ENCODE measurements at regions of chr10 and their contacts with region 1.

Region 1: DNA sequence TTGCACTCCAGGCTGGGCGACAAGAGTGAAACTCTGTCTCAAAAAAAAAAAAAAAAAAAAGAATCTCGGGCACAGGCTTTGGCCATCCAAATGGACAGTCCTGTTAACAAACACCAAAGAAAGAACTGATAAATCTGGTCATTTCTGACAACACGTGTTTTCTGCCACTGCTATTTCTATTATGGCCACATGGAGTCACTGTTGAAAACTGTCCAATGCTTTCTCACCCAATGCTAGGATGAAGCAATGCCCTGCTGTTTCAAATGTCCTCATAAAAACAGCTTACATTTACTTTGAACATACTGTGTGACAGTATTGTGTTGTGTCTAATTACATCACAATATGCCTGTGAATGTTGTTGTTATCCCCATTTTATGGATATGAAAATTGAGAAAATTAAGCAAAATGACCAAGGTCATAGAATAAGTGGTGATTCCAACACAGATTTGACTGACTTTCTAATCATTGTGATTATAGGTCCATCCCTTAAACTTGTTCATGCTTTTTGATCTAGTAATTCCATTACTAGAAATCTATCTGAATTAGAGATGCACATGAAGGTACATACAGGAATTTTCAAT is 19.9 kb upstream of the MAP3K8 start:
- DNase-seq: peak in 1 of 3 donors; percentile 69
- ATAC-seq: peak; percentile 89
- H3K4me3 ChIP-seq: no peak overlapping the region
- H3K4me1 ChIP-seq: peaks cover 7% of the 10 kb centered on the region
- CTCF ChIP-seq: peak; percentile 62

Region 2: GRCh38 chr10:30011396-30011795 is 402.7 kb before region 1 on chr10:
- intact Hi-C with region 1: no loop called
- DNase-seq: no peak
- ATAC-seq: no peak
- H3K4me3 ChIP-seq: no peak overlapping the region
- H3K4me1 ChIP-seq: no peaks in the 10 kb centered on the region
- CTCF ChIP-seq: no peak

Region 3: GRCh38 chr10:30519639-30520038 is 105.6 kb after region 1 on chr10:
- intact Hi-C with region 1: no loop called
- DNase-seq: no peak
- ATAC-seq: no peak
- H3K4me3 ChIP-seq: no peak overlapping the region
- H3K4me1 ChIP-seq: no peaks in the 10 kb centered on the region
- CTCF ChIP-seq: no peak

Region 4: GRCh38 chr10:30534465-30535144 is 120.5 kb after region 1 on chr10:
- intact Hi-C with region 1: loop called (anchors 2 to 5 kb)
- DNase-seq: peak in 2 of 3 donors; percentile 51 to 89
- ATAC-seq: peak; percentile 82
- H3K4me3 ChIP-seq: no peak overlapping the region
- H3K4me1 ChIP-seq: no peaks in the 10 kb centered on the region
- CTCF ChIP-seq: peak; percentile 81

Measured in mucosa of descending colon (tissue), 3 donors.